Naive thymus-derived CD4-positive, alpha-beta T cell (primary cell): ENCODE measurements at regions of chr18 and their contacts with region 1.

Region 1: GRCh38 chr18:51211552-51211951 is 14.1 kb upstream of the MEX3C start:
- DNase-seq: peak in 2 of 9 donors; percentile 14 to 46
- ATAC-seq: peak; percentile 95
- H3K4me3 ChIP-seq: no peak overlapping the region
- H3K4me3 Mint-ChIP-seq: peak overlapping the region in 1 of 10 donors; percentile 42
- H3K27ac ChIP-seq: no peak overlapping the region
- H3K27ac Mint-ChIP-seq: peak overlapping the region in 6 of 9 donors; percentile 5 to 50 (median 12)
- H3K4me1 ChIP-seq: peaks cover 0 to 7% of the 10 kb centered on the region in 2 donors
- H3K4me1 Mint-ChIP-seq: peaks cover 10 to 19% (median 12%) of the 10 kb centered on the region in 7 donors
- H3K27me3 ChIP-seq: no peaks in the 10 kb centered on the region
- H3K27me3 Mint-ChIP-seq: no peaks in the 10 kb centered on the region

Region 2: DNA sequence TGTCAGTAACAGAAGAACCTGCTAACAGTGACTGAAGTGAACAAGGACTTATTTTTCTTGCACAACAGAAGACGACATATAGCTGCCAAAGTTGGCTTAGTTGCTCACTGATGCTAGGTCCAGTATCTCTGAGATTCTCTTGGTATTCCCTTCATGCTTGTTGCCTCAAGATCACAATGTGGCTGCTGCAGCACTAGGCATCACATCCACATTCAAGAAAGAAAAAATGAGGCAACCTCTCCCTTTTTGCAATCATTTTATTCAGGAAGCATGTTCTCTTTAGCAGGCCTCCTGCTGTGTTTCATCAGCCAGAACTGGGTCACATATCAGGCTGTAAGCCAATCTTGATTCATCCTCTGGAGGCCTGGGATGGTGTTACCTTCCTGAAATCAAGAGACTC is 663.4 kb before region 1 on chr18:
- CTCF ChIA-PET with region 1: no interaction called
- POLR2A ChIA-PET with region 1: no interaction called
- intact Hi-C with region 1: no loop called
- DNase-seq: no peak
- ATAC-seq: no peak
- H3K4me3 ChIP-seq: no peak overlapping the region
- H3K4me3 Mint-ChIP-seq: no peak overlapping the region
- H3K27ac ChIP-seq: no peak overlapping the region
- H3K27ac Mint-ChIP-seq: no peak overlapping the region
- H3K4me1 ChIP-seq: no peaks in the 10 kb centered on the region
- H3K4me1 Mint-ChIP-seq: peaks cover 0 to 1% (median 0%) of the 10 kb centered on the region in 7 donors
- H3K27me3 ChIP-seq: no peaks in the 10 kb centered on the region
- H3K27me3 Mint-ChIP-seq: peaks cover 0 to 31% (median 17%) of the 10 kb centered on the region in 5 donors

Region 3: DNA sequence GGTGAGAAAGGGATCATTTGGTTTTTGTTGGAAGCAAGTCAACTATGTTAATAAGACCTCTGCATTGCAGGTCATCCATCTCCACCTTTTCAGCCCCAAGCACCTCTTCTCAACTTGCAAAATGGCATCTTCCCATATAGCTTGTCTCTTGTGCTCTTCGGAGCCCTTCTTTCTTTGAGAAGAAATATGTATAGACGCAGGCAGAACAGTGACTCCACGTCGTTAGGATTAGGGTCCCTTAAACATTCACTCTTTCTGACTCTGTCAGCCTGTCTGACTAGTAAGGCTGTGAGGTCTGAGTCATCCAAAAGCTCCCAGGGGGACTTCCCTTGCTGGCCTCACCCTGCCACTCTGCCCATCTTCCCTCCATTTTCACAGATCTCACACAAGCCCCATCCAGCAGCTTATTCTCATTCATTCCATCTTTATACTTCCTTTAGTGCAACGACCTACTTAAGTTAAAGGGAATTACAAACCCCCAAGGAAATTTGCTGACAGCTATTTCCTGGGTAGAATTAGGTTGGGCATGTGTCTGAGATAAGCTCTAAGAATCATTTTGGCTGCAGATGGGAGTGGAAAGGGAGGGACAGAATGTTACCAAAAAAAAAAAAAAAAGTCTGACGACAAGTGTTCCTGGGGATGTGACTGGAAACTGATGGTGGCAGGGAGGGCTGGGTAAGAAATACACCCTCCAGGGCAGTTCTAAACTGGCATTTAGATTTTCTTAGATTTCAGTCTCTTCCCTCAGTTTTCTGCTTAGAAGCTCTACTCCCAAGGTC is 23.6 kb after region 1 on chr18:
- CTCF ChIA-PET with region 1: no interaction called
- POLR2A ChIA-PET with region 1: no interaction called
- intact Hi-C with region 1: loop called in 1 of 2 experiments (anchors 2 kb)
- DNase-seq: peak in 1 of 9 donors; percentile 37
- ATAC-seq: peak; percentile 41
- H3K4me3 ChIP-seq: no peak overlapping the region
- H3K4me3 Mint-ChIP-seq: peak overlapping the region in 1 of 10 donors; percentile 0
- H3K27ac ChIP-seq: no peak overlapping the region
- H3K27ac Mint-ChIP-seq: peak overlapping the region in 1 of 9 donors; percentile 61
- H3K4me1 ChIP-seq: no peaks in the 10 kb centered on the region
- H3K4me1 Mint-ChIP-seq: peaks cover 0 to 23% (median 0%) of the 10 kb centered on the region in 7 donors
- H3K27me3 ChIP-seq: no peaks in the 10 kb centered on the region
- H3K27me3 Mint-ChIP-seq: peaks cover 0 to 13% (median 5%) of the 10 kb centered on the region in 5 donors